Activated CD8-positive, alpha-beta T cell treated with anti-CD3 and anti-CD28 coated beads, Interleukin-2, amount 10 ng/mL, durations not matched to agents 7 days and 5 days (primary cell): ENCODE measurements at regions of chr3 and their contacts with region 1.

Region 1: GRCh38 chr3:112111785-112112402 is 21.2 kb downstream of the GCSAM start:
- DNase-seq: peak; percentile 73
- ATAC-seq: peak; percentile 94
- H3K4me3 Mint-ChIP-seq: no peak overlapping the region
- H3K27ac Mint-ChIP-seq: no peak overlapping the region
- H3K4me1 Mint-ChIP-seq: peaks cover 2% of the 10 kb centered on the region
- H3K27me3 Mint-ChIP-seq: no peaks in the 10 kb centered on the region

Region 2: GRCh38 chr3:111859974-111860859 is 251.7 kb before region 1 on chr3:
- CTCF ChIA-PET with region 1: no interaction called
- POLR2A ChIA-PET with region 1: no interaction called
- DNase-seq: peak; percentile 78
- ATAC-seq: peak; percentile 73
- H3K4me3 Mint-ChIP-seq: peak overlapping the region; percentile 86
- H3K27ac Mint-ChIP-seq: peak overlapping the region; percentile 77
- H3K4me1 Mint-ChIP-seq: peaks cover 11% of the 10 kb centered on the region
- H3K27me3 Mint-ChIP-seq: peaks cover 45% of the 10 kb centered on the region

Region 3: GRCh38 chr3:112092496-112093179 is 19.3 kb before region 1 on chr3:
- CTCF ChIA-PET with region 1: interaction called, 17 read pairs
- POLR2A ChIA-PET with region 1: no interaction called
- DNase-seq: no peak
- ATAC-seq: peak; percentile 28
- H3K4me3 Mint-ChIP-seq: no peak overlapping the region
- H3K27ac Mint-ChIP-seq: peak overlapping the region; percentile 56
- H3K4me1 Mint-ChIP-seq: peaks cover 40% of the 10 kb centered on the region
- H3K27me3 Mint-ChIP-seq: no peaks in the 10 kb centered on the region

Region 4: GRCh38 chr3:112136959-112137693 is 25.2 kb after region 1 on chr3:
- CTCF ChIA-PET with region 1: interaction called, 34 read pairs
- POLR2A ChIA-PET with region 1: interaction called, 6 read pairs
- DNase-seq: peak; percentile 67
- ATAC-seq: no peak
- H3K4me3 Mint-ChIP-seq: no peak overlapping the region
- H3K27ac Mint-ChIP-seq: no peak overlapping the region
- H3K4me1 Mint-ChIP-seq: peaks cover 36% of the 10 kb centered on the region
- H3K27me3 Mint-ChIP-seq: no peaks in the 10 kb centered on the region

Region 5: GRCh38 chr3:112199619-112200316 is 87.9 kb after region 1 on chr3:
- CTCF ChIA-PET with region 1: no interaction called
- POLR2A ChIA-PET with region 1: no interaction called
- DNase-seq: no peak
- ATAC-seq: no peak
- H3K4me3 Mint-ChIP-seq: no peak overlapping the region
- H3K27ac Mint-ChIP-seq: no peak overlapping the region
- H3K4me1 Mint-ChIP-seq: no peaks in the 10 kb centered on the region
- H3K27me3 Mint-ChIP-seq: peaks cover 4% of the 10 kb centered on the region

Region 6: GRCh38 chr3:112298781-112299180 is 186.9 kb after region 1 on chr3:
- CTCF ChIA-PET with region 1: interaction called, 67 read pairs
- POLR2A ChIA-PET with region 1: no interaction called
- DNase-seq: no peak
- ATAC-seq: no peak
- H3K4me3 Mint-ChIP-seq: no peak overlapping the region
- H3K27ac Mint-ChIP-seq: no peak overlapping the region
- H3K4me1 Mint-ChIP-seq: peaks cover 20% of the 10 kb centered on the region
- H3K27me3 Mint-ChIP-seq: no peaks in the 10 kb centered on the region

Region 7: GRCh38 chr3:112321867-112322649 is 210.2 kb after region 1 on chr3:
- CTCF ChIA-PET with region 1: interaction called, 10 read pairs
- POLR2A ChIA-PET with region 1: no interaction called
- DNase-seq: no peak
- ATAC-seq: no peak
- H3K4me3 Mint-ChIP-seq: no peak overlapping the region
- H3K27ac Mint-ChIP-seq: no peak overlapping the region
- H3K4me1 Mint-ChIP-seq: no peaks in the 10 kb centered on the region
- H3K27me3 Mint-ChIP-seq: peaks cover 10% of the 10 kb centered on the region

Region 8: DNA sequence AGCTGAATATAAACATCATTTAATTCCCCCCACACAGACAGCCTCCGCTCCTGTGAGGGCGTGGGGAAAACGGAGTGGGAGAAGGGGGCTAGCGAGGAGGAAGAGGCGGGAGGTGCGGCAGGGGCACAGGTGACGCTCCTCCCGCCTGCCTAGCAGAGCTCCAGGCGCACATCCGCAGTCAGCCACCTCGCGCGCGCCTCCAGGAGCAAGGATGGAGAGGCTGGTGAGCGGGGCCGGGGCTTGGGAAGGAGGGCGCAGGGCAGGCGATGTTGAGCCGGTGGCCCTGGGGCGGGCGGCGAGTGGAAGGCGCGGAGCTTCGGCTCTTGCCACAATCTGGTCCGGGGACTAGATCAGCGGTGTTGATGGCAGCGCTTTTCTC is 221.1 kb after region 1 on chr3 and contains the start of gene CD200:
- CTCF ChIA-PET with region 1: interaction called, 15 read pairs
- POLR2A ChIA-PET with region 1: no interaction called
- DNase-seq: peak; percentile 49
- ATAC-seq: peak; percentile 87
- H3K4me3 Mint-ChIP-seq: peak within 1 kb of the TSS; percentile 84
- H3K27ac Mint-ChIP-seq: peak within 1 kb of the TSS; percentile 78
- H3K4me1 Mint-ChIP-seq: peaks cover 32% of the 10 kb centered on the region
- H3K27me3 Mint-ChIP-seq: no peaks in the 10 kb centered on the region
- total RNA-seq, gene CD200: 0.86 to 1.4 TPM

Region 9: GRCh38 chr3:112416391-112417212 is 304.7 kb after region 1 on chr3:
- CTCF ChIA-PET with region 1: no interaction called
- POLR2A ChIA-PET with region 1: no interaction called
- DNase-seq: no peak
- ATAC-seq: no peak
- H3K4me3 Mint-ChIP-seq: no peak overlapping the region
- H3K27ac Mint-ChIP-seq: no peak overlapping the region
- H3K4me1 Mint-ChIP-seq: peaks cover 3% of the 10 kb centered on the region
- H3K27me3 Mint-ChIP-seq: no peaks in the 10 kb centered on the region